Common myeloid progenitor, CD34-positive (primary cell): ENCODE measurements at regions of chr16 and their contacts with region 1.

Region 1: DNA sequence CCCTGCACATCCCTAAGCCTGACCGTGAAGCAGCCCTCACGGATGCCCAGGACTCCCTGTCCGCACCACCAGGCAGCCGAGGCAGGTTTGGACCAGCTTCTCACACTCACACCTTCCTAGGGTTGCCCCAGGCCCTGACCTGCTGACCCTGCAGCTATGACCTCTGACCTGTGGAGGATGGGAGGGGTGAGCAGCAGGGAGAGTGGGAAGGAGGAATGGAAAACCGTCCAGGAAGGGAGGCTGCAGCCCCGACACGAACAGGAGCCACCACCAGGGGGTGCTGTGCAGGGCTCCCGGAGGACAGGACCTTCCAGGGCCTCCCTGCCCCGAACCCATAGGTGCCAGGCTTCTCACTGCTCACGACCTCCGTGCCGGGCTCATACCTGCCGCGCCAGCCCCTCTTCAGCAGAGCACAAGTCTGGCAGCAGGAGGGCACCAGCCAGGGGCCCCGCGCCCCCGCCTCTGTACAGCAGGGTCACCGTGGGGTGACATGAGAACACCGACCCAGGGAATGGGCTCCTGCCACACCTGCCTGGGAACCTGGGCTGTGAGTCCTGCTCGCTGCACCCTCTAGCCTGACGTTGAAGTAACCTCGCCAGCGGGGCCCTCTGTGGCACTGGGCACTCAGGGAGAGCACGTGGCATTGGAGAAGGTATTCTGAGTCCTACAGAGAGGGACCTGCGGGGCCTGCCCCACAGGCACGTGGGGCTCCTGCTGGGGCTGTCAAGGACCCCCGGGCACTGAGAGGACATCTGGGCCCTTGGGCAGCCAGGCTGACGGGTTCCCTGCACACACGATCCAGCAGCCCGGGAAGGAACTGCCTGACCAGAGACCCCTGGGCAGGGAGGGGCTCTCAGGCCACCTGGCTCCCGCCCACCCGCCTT is 37.6 kb downstream of the CTU2 start:
- DNase-seq: peak; percentile 47 to 70 (median 63)
- H3K4me3 ChIP-seq: no peak overlapping the region
- H3K27ac ChIP-seq: no peak overlapping the region
- H3K4me1 ChIP-seq: peaks cover 0 to 31% (median 26%) of the 10 kb centered on the region in 4 experiments
- H3K27me3 ChIP-seq: no peaks in the 10 kb centered on the region

Region 2: GRCh38 chr16:88452482-88453216 is 291.3 kb before region 1 on chr16:
- CTCF ChIA-PET with region 1: no interaction called
- POLR2A ChIA-PET with region 1: no interaction called
- DNase-seq: peak; percentile 94 to 98 (median 97)
- H3K4me3 ChIP-seq: peak overlapping the region; percentile 57 to 85 (median 70)
- H3K27ac ChIP-seq: peak overlapping the region in 1 of 2 experiments; percentile 61
- H3K4me1 ChIP-seq: peaks cover 0 to 68% (median 64%) of the 10 kb centered on the region in 4 experiments
- H3K27me3 ChIP-seq: no peaks in the 10 kb centered on the region

Region 3: GRCh38 chr16:88754912-88755744 is 11.2 kb after region 1 on chr16:
- CTCF ChIA-PET with region 1: interaction called, 53 read pairs
- POLR2A ChIA-PET with region 1: interaction called, 5 read pairs
- DNase-seq: peak in 1 of 3 donors; percentile 66
- H3K4me3 ChIP-seq: no peak overlapping the region
- H3K27ac ChIP-seq: peak overlapping the region in 1 of 2 experiments; percentile 34
- H3K4me1 ChIP-seq: peaks cover 0 to 34% (median 11%) of the 10 kb centered on the region in 4 experiments
- H3K27me3 ChIP-seq: no peaks in the 10 kb centered on the region

Region 4: GRCh38 chr16:88815901-88816589 is 72.1 kb after region 1 on chr16:
- CTCF ChIA-PET with region 1: no interaction called
- POLR2A ChIA-PET with region 1: no interaction called
- DNase-seq: peak in 2 of 3 donors; percentile 72 to 73
- H3K4me3 ChIP-seq: no peak overlapping the region
- H3K27ac ChIP-seq: no peak overlapping the region
- H3K4me1 ChIP-seq: peaks cover 0 to 21% (median 17%) of the 10 kb centered on the region in 4 experiments
- H3K27me3 ChIP-seq: no peaks in the 10 kb centered on the region